ENCODE measurements at regions of chr1 and their contacts with region 1.

Region 1: DNA sequence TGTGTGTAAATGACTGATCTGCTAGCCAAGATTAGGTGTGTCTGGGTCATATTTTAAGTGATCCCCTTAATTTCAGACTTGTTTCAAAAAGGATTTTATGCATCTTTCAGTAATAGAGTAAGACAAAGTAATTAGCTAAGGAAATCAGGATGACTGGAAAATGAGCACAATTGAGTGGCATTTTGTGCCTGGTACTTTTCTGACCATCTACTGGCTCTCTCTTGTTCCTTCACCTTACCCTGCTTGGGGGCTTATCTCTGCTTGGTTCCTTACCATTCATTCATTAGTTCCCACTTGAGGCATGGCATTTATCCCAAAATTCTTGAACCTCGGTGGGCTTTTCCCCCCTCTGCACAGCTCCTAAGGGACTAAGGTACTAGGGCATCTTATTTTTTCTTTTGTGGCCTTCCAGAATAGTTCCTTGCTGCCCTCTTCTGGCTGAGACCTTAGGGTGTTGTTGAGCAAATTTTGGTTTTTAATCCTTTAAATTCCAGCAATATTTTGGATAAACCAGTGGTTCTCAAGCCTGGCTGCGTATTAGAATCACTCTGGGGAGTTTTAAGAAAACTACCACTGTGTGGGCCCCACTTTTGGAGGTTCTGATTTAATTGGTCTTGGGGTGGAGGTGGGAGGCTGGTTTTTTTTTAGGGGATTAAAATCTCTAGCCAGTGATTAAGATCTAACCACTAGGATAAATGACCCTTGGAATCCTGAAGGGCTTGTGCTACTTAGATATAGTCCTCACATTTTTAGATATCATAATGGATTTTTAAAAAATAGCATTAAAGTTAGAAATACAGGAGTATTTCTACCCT is 50.8 kb downstream of the HS2ST1 start:
- DNase-seq: peak in 1 of 10 donors; percentile 23

Region 2: GRCh38 chr1:86833461-86834215 is 131.6 kb before region 1 on chr1:
- intact Hi-C with region 1: loop called (anchors 1 kb)
- DNase-seq: peak in 9 of 10 donors; percentile 12 to 87 (median 56)